ENCODE measurements at regions of chr17 and their contacts with region 1.

Region 1: DNA sequence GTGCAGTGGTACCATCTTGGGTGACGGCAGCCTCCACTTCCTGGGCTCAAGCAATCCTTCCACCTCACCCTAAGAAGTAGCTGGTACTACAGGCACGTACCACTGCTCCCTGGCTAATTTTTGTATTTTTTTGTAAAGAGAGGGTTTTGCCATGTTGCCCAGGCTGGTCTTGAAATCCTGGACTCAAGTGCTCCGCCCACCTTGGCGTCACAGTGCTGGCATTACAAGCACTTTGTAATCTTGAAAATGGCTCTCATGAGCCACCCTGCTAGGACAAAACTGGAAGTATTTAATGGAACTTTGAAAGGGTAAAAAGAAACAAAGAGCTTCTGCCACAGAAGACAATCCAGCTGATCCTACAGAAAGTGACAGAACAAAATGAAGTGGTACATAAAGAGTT is 9.2 kb downstream of the SUMO2 start:
- DNase-seq: no peak
- ATAC-seq: no peak
- H3K4me3 ChIP-seq: no peak overlapping the region
- H3K27ac ChIP-seq: no peak overlapping the region; the same call in 1 of the 2 replicates
- H3K4me1 ChIP-seq: peaks cover 0 to 7% of the 10 kb centered on the region in 2 experiments; a peak in 1 of 4 replicates
- H3K27me3 ChIP-seq: no peaks in the 10 kb centered on the region
- CTCF ChIP-seq: no peak
- POLR2A ChIP-seq: no peak
- RAD21 ChIP-seq: no peak

Region 2: GRCh38 chr17:75131280-75132017 is 42.1 kb before region 1 on chr17 and contains the start of gene NT5C:
- CTCF ChIA-PET with region 1: interaction called, 4 read pairs
- POLR2A ChIA-PET with region 1: no interaction called
- RAD21 ChIA-PET with region 1: no interaction called
- intact Hi-C with region 1: loop called (anchors 1 kb)
- DNase-seq: no peak
- ATAC-seq: peak; percentile 82
- H3K4me3 ChIP-seq: peak within 1 kb of the TSS; percentile 85
- H3K27ac ChIP-seq: peak within 1 kb of the TSS; percentile 99
- H3K4me1 ChIP-seq: peaks cover 24 to 68% of the 10 kb centered on the region in 2 experiments; a peak in 3 of 4 replicates
- H3K27me3 ChIP-seq: no peaks in the 10 kb centered on the region
- CTCF ChIP-seq: peak in 2 of 3 experiments; percentile 73 to 91; a peak in 4 of 6 replicates
- POLR2A ChIP-seq: peak; percentile 78
- RAD21 ChIP-seq: no peak
- total RNA-seq, gene NT5C: 115 TPM

Region 3: GRCh38 chr17:75154195-75155106 is 19.1 kb before region 1 on chr17 and contains the start of gene JPT1:
- CTCF ChIA-PET with region 1: interaction called, 17 read pairs
- POLR2A ChIA-PET with region 1: interaction called, 6 read pairs
- RAD21 ChIA-PET with region 1: interaction called in 1 of 2 experiments, 3 read pairs
- intact Hi-C with region 1: no loop called
- DNase-seq: peak; percentile 100
- ATAC-seq: peak; percentile 94
- H3K4me3 ChIP-seq: peak within 1 kb of the TSS; percentile 88 to 96
- H3K27ac ChIP-seq: peak within 1 kb of the TSS; percentile 94
- H3K4me1 ChIP-seq: peaks cover 61 to 64% of the 10 kb centered on the region in 2 experiments
- H3K27me3 ChIP-seq: no peaks in the 10 kb centered on the region
- CTCF ChIP-seq: no peak
- POLR2A ChIP-seq: peak; percentile 100
- RAD21 ChIP-seq: no peak
- total RNA-seq, gene JPT1: 575 TPM

Region 4: GRCh38 chr17:75199886-75200618 is 26.5 kb after region 1 on chr17:
- CTCF ChIA-PET with region 1: interaction called, 22 read pairs
- POLR2A ChIA-PET with region 1: interaction called, 7 read pairs
- RAD21 ChIA-PET with region 1: no interaction called
- intact Hi-C with region 1: no loop called
- DNase-seq: no peak
- ATAC-seq: no peak
- H3K4me3 ChIP-seq: no peak overlapping the region
- H3K27ac ChIP-seq: peak overlapping the region; percentile 62
- H3K4me1 ChIP-seq: peaks cover 20 to 37% of the 10 kb centered on the region in 2 experiments
- H3K27me3 ChIP-seq: no peaks in the 10 kb centered on the region
- CTCF ChIP-seq: no peak
- POLR2A ChIP-seq: no peak
- RAD21 ChIP-seq: no peak

Region 5: GRCh38 chr17:75456417-75457046 is 283.0 kb after region 1 on chr17 and contains the start of gene TMEM94:
- CTCF ChIA-PET with region 1: no interaction called
- POLR2A ChIA-PET with region 1: no interaction called
- RAD21 ChIA-PET with region 1: no interaction called
- intact Hi-C with region 1: no loop called
- DNase-seq: peak; percentile 98
- ATAC-seq: peak; percentile 98
- H3K4me3 ChIP-seq: peak within 1 kb of the TSS; percentile 84 to 98
- H3K27ac ChIP-seq: peak within 1 kb of the TSS; percentile 68
- H3K4me1 ChIP-seq: peaks cover 12 to 14% of the 10 kb centered on the region in 2 experiments
- H3K27me3 ChIP-seq: no peaks in the 10 kb centered on the region
- CTCF ChIP-seq: no peak
- POLR2A ChIP-seq: no peak
- RAD21 ChIP-seq: no peak
- total RNA-seq, gene TMEM94: 75.4 TPM

Measured in HCT116 (cell line).